CD8-positive, alpha-beta memory T cell (primary cell): ENCODE measurements at regions of chr6 and their contacts with region 1.

Region 1: GRCh38 chr6:53718597-53719460 is 53.3 kb upstream of the KLHL31 start:
- DNase-seq: peak in 2 of 5 donors; percentile 15 to 28
- H3K4me3 ChIP-seq: no peak overlapping the region
- H3K4me3 Mint-ChIP-seq: no peak overlapping the region
- H3K27ac ChIP-seq: no peak overlapping the region
- H3K27ac Mint-ChIP-seq: no peak overlapping the region
- H3K4me1 ChIP-seq: no peaks in the 10 kb centered on the region
- H3K4me1 Mint-ChIP-seq: peaks cover 2 to 5% (median 4%) of the 10 kb centered on the region in 3 donors
- H3K27me3 ChIP-seq: no peaks in the 10 kb centered on the region
- H3K27me3 Mint-ChIP-seq: peaks cover 8 to 21% of the 10 kb centered on the region in 2 donors

Region 2: DNA sequence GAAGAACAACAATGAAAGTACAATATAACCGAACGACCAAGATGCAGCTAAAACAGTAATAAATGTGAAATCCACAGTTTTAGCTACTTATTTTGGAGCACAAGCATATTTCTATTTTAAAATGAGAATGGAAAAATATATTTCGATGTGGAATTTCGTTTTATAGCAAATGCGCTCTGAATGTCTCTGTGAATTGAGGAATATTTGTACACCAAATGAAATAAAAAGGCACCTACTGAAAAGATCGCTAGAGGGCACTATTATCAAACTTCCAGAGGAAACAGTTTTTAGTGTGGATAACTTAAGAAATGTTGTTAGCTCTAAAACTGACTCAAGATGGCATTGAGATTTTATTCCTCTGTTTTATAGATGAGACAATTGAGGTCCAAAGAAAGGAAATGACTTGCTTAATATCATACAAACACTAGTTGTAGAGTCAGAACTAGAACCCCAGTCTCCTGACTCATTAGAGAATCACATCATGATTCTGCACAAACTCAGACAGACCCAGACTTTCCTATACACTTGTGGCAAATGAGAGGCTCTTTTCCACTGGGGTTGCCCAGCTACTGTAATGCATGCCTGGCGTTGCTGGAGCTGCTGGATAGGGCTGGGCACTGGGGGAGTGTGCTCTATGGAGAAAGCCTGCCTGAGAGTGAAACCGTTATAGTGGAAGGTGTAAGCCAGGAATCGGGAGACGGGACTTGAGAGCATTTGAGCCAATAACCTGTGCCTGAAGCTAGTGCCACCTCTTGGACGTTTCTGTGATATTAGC is 225.8 kb before region 1 on chr6:
- CTCF ChIA-PET with region 1: interaction called, 107 read pairs
- POLR2A ChIA-PET with region 1: no interaction called
- DNase-seq: peak in 2 of 5 donors; percentile 41
- H3K4me3 ChIP-seq: no peak overlapping the region
- H3K4me3 Mint-ChIP-seq: peak overlapping the region in 1 of 7 donors; percentile 42
- H3K27ac ChIP-seq: no peak overlapping the region
- H3K27ac Mint-ChIP-seq: peak overlapping the region in 2 of 8 donors; percentile 51 to 75
- H3K4me1 ChIP-seq: no peaks in the 10 kb centered on the region
- H3K4me1 Mint-ChIP-seq: peaks cover 0 to 4% (median 0%) of the 10 kb centered on the region in 3 donors
- H3K27me3 ChIP-seq: no peaks in the 10 kb centered on the region
- H3K27me3 Mint-ChIP-seq: peaks cover 8 to 16% of the 10 kb centered on the region in 2 donors

Region 3: GRCh38 chr6:53707108-53707897 is 11.5 kb before region 1 on chr6:
- CTCF ChIA-PET with region 1: interaction called, 61 read pairs
- POLR2A ChIA-PET with region 1: no interaction called
- DNase-seq: no peak
- H3K4me3 ChIP-seq: no peak overlapping the region
- H3K4me3 Mint-ChIP-seq: no peak overlapping the region
- H3K27ac ChIP-seq: no peak overlapping the region
- H3K27ac Mint-ChIP-seq: no peak overlapping the region
- H3K4me1 ChIP-seq: no peaks in the 10 kb centered on the region
- H3K4me1 Mint-ChIP-seq: no peaks in the 10 kb centered on the region
- H3K27me3 ChIP-seq: no peaks in the 10 kb centered on the region
- H3K27me3 Mint-ChIP-seq: peaks cover 12 to 33% of the 10 kb centered on the region in 2 donors

Region 4: DNA sequence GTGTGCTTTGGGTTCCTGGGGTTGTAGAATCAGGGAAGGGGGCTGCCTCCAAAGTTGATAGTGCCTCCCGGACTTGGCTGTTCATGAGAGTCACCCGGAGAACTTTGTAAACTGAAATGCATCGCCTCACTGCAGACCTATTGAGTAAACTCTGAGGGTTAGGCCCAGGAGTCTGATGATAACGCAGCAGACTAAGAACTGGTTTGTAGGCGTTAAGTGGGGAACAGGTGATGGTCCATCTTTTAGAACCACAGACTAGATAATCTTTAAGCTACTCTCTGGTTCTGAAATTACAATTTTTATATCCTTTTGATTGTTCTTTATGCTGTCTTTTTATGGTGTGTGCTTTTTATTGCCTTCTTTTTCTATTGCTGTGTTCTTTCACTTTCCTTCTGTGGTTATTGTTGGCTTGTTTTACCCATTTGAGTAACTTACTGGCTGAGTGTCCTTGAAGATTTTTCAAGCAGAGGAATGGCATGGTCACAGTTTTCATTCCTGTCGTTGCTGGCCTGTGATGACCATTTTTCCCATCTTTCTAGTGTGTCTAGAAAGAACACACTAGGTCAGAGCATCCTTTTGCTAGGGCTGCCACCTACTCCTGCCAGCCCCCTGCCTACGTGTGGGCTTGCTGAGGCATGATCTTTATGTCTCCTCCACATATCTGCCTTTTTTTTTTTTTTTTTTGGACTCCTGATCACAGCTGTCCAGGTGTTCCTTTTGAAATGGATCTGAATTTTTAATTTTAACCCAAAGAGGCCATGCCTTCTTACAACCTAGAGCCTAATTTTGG is 106.9 kb after region 1 on chr6:
- CTCF ChIA-PET with region 1: no interaction called
- POLR2A ChIA-PET with region 1: no interaction called
- DNase-seq: no peak
- H3K4me3 ChIP-seq: no peak overlapping the region
- H3K4me3 Mint-ChIP-seq: no peak overlapping the region
- H3K27ac ChIP-seq: no peak overlapping the region
- H3K27ac Mint-ChIP-seq: no peak overlapping the region
- H3K4me1 ChIP-seq: no peaks in the 10 kb centered on the region
- H3K4me1 Mint-ChIP-seq: peaks cover 0 to 4% (median 3%) of the 10 kb centered on the region in 3 donors
- H3K27me3 ChIP-seq: no peaks in the 10 kb centered on the region
- H3K27me3 Mint-ChIP-seq: peaks cover 0 to 2% of the 10 kb centered on the region in 2 donors